AG04450 (cell line): ENCODE measurements at regions of chr15 and their contacts with region 1.

Region 1: GRCh38 chr15:25426896-25427610 is 11.8 kb downstream of the UBE3A start:
- DNase-seq: no peak
- H3K4me3 ChIP-seq: no peak overlapping the region
- H3K27ac ChIP-seq: no peak overlapping the region
- H3K27me3 ChIP-seq: no peaks in the 10 kb centered on the region
- CTCF ChIP-seq: no peak

Region 2: DNA sequence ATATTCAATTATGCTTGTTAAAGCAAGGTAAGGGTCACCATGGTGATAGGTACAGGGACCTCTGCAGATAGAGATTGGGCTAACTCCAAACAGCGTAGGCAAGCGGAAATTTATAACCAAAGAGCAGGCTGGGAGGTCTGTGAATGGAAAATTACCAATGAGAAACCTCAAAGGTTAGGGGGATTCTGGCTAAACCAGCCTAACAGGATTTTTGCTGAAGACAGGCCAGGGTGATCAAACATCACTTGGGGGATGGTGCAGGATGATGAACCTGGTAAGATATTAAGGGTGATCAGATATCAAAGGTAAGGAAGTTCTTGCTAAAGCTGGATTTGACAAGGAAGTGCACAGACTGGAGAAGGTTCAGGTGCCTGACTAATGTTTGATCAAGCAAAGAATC is 507.6 kb before region 1 on chr15:
- CTCF ChIA-PET with region 1: no interaction called
- POLR2A ChIA-PET with region 1: no interaction called
- DNase-seq: no peak
- H3K4me3 ChIP-seq: no peak overlapping the region
- H3K27ac ChIP-seq: no peak overlapping the region
- H3K27me3 ChIP-seq: no peaks in the 10 kb centered on the region
- CTCF ChIP-seq: no peak

Region 3: GRCh38 chr15:25136119-25136518 is 290.9 kb before region 1 on chr15:
- CTCF ChIA-PET with region 1: no interaction called
- POLR2A ChIA-PET with region 1: interaction called, 11 read pairs
- DNase-seq: no peak
- H3K4me3 ChIP-seq: no peak overlapping the region
- H3K27ac ChIP-seq: no peak overlapping the region
- H3K27me3 ChIP-seq: no peaks in the 10 kb centered on the region
- CTCF ChIP-seq: peak; percentile 41; the same call in 1 of the 2 replicates